Posterior vena cava (tissue), 2 donors: ENCODE measurements at regions of chr2 and their contacts with region 1.

Region 1: DNA sequence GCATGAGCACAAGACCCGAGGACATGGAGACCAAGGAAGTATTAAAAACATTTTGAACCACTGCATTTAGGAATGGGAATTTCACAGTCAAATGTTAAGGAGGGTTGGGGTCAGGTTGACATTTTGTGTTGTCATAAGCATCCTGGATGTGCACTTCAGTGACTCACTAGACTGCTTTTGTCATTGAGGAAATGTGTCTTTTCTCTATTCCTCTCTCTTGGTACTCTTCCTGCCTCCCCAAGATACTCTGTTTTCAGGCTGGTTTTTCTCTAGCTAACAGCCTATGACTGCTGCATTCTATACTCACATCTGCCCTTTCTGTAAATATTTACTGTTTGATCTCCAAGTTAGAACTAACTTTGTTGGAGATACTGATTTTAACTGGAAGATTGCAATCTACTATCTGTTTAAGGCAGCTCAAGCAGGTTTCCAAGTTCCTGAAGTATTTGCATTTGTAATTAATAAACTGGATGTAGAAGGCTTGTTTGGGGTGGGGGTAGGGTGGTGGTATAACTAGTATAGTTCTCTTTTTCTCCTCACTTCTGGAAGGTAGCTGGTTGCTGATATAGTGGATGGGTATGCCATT is 23.5 kb downstream of the XRCC5 start:
- DNase-seq: no peak

Region 2: GRCh38 chr2:216121255-216121654 is 11.4 kb before region 1 on chr2:
- intact Hi-C with region 1: loop called in 1 of 2 experiments (anchors 1 kb)
- DNase-seq: no peak